Naive thymus-derived CD4-positive, alpha-beta T cell (primary cell): ENCODE measurements at regions of chr12 and their contacts with region 1.

Region 1: GRCh38 chr12:57063991-57064685 is 14.2 kb upstream of the MYO1A start:
- DNase-seq: peak in 7 of 9 donors; percentile 67 to 90 (median 85)
- ATAC-seq: peak; percentile 97
- H3K4me3 ChIP-seq: peak overlapping the region; percentile 15
- H3K4me3 Mint-ChIP-seq: peak overlapping the region; percentile 13 to 90 (median 80)
- H3K27ac ChIP-seq: peak overlapping the region; percentile 76
- H3K27ac Mint-ChIP-seq: peak overlapping the region; percentile 79 to 97 (median 91)
- H3K4me1 ChIP-seq: peaks cover 17 to 20% of the 10 kb centered on the region in 2 donors
- H3K4me1 Mint-ChIP-seq: peaks cover 10 to 45% (median 34%) of the 10 kb centered on the region in 7 donors
- H3K27me3 ChIP-seq: no peaks in the 10 kb centered on the region
- H3K27me3 Mint-ChIP-seq: no peaks in the 10 kb centered on the region

Region 2: DNA sequence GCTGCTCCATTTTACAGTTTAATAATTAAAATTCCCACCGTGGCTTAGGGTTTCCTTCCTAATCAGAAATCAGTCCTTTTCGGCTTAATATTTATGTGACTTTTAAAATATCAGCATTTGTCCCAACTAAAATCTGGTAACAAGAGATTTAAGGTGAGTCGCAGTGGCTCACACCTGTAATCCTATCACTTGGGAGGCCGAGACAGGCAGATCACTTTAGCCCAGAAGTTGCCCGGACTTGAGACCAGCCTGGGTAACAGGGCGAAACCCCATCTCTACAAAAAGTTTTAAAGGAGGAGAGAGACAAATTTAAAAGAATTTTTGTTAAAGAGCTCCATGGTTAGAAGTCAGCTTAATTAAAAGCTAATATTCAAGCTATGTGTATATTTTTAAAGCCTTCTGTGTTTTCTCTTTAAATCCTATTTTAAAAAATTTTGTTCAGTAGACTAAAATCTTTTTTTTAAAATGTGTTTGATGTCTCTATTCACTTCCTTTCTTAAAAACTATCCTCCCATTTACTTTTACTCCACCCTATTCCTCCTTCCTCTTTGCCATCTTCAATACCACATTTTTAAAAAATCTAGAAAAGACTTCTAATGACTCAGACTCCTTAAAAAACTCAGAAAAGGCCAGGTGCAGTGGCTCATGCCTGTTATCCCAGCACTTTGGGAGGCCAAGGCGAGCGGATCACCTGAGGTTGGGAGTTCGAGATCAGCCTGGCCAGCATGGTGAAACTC is 44.0 kb before region 1 on chr12:
- CTCF ChIA-PET with region 1: interaction called, 43 read pairs
- POLR2A ChIA-PET with region 1: interaction called, 4 read pairs
- intact Hi-C with region 1: no loop called
- DNase-seq: peak in 1 of 9 donors; percentile 34
- ATAC-seq: no peak
- H3K4me3 ChIP-seq: no peak overlapping the region
- H3K4me3 Mint-ChIP-seq: peak overlapping the region in 9 of 10 donors; percentile 60 to 84 (median 75)
- H3K27ac ChIP-seq: peak overlapping the region; percentile 59
- H3K27ac Mint-ChIP-seq: peak overlapping the region in 8 of 9 donors; percentile 71 to 96 (median 90)
- H3K4me1 ChIP-seq: peaks cover 0 to 26% of the 10 kb centered on the region in 2 donors
- H3K4me1 Mint-ChIP-seq: peaks cover 6 to 58% (median 40%) of the 10 kb centered on the region in 7 donors
- H3K27me3 ChIP-seq: no peaks in the 10 kb centered on the region
- H3K27me3 Mint-ChIP-seq: peaks cover 0 to 2% (median 0%) of the 10 kb centered on the region in 5 donors

Region 3: DNA sequence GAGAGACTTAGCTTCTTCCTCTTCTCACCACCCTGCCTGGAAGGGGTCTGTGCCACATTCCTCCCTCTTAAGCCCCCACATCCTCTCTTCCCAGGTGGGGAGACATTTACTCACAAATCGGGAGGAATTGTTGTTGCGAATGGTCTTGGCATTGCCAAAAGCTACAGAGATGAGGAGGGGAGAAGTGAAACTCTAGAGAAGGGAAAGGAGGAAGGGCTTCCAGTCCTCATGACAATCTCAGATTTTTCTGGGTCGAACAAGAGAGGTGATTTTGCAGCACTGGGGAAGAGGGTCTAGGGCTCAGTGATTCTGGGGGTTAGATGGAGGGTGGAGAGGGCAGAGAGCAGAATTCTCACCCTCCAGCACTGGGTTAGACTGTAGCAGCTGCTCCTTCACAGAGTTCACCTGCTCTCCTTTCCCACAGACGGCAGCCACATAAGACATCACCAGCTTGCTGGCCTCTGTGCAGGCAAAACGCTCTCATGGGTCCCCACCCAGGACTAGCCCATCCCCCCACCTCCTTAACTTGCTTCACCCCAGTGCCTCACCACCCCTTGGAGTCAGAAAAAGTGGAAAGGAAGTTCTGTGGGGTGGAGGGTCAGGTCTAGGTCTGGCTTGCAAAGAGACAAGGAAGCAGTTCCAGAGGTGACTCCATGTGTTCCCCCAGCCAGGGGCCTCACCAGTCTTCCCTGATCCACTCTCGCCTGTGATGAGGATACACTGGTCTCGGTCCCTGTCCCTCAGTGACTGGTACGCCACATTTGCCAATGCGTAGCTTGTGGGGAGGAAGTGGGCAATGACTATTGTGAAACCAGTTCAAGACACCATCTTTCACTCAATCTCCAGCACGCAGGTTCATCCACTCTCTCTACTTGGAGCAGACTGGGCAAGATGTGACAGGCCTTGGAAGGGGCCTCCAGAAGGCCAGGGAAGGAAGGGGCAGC is 16.9 kb before region 1 on chr12:
- CTCF ChIA-PET with region 1: interaction called, 19 read pairs
- POLR2A ChIA-PET with region 1: interaction called, 10 read pairs
- intact Hi-C with region 1: loop called (anchors 2 kb)
- DNase-seq: peak in 5 of 9 donors; percentile 21 to 54 (median 37)
- ATAC-seq: peak; percentile 75
- H3K4me3 ChIP-seq: peak overlapping the region; percentile 11
- H3K4me3 Mint-ChIP-seq: peak overlapping the region; percentile 45 to 79 (median 59)
- H3K27ac ChIP-seq: no peak overlapping the region
- H3K27ac Mint-ChIP-seq: peak overlapping the region; percentile 71 to 93 (median 79)
- H3K4me1 ChIP-seq: peaks cover 19 to 20% of the 10 kb centered on the region in 2 donors
- H3K4me1 Mint-ChIP-seq: peaks cover 25 to 39% (median 34%) of the 10 kb centered on the region in 7 donors
- H3K27me3 ChIP-seq: no peaks in the 10 kb centered on the region
- H3K27me3 Mint-ChIP-seq: peaks cover 0 to 6% (median 0%) of the 10 kb centered on the region in 5 donors

Region 4: DNA sequence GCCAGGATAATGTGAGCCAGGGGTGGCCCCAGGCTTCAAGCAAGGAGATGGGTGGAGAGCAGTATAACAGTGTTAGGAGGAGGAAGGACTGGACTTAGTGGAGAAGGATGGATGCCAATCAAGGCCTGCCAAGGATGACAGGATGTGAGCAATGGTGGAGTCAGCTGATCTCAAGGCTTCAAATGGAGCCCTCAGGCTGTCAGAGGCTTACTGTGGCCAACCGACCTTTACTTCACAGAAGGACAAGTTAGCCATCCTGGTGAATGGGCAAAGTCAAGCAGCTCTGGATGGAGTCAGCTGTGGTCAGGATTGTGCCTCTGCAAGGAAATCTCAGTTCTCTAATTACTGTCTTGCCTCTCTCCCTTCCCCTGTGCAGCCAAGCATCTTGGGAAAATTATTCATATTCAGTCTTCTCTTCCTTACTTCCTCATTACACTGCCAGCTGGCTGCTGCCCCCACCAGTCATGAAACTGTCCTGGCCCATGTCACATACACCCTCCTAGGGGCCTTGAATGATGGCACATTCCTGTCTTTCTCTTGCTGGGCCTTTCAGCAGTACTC is 54.7 kb after region 1 on chr12:
- CTCF ChIA-PET with region 1: interaction called, 12 read pairs
- POLR2A ChIA-PET with region 1: interaction called, 4 read pairs
- intact Hi-C with region 1: no loop called
- DNase-seq: no peak
- ATAC-seq: peak; percentile 77
- H3K4me3 ChIP-seq: no peak overlapping the region
- H3K4me3 Mint-ChIP-seq: no peak overlapping the region
- H3K27ac ChIP-seq: no peak overlapping the region
- H3K27ac Mint-ChIP-seq: no peak overlapping the region
- H3K4me1 ChIP-seq: no peaks in the 10 kb centered on the region
- H3K4me1 Mint-ChIP-seq: peaks cover 0 to 6% (median 0%) of the 10 kb centered on the region in 7 donors
- H3K27me3 ChIP-seq: no peaks in the 10 kb centered on the region
- H3K27me3 Mint-ChIP-seq: peaks cover 0 to 11% (median 0%) of the 10 kb centered on the region in 5 donors